H1 (cell line): ENCODE measurements at regions of chr11 and their contacts with region 1.

Region 1: DNA sequence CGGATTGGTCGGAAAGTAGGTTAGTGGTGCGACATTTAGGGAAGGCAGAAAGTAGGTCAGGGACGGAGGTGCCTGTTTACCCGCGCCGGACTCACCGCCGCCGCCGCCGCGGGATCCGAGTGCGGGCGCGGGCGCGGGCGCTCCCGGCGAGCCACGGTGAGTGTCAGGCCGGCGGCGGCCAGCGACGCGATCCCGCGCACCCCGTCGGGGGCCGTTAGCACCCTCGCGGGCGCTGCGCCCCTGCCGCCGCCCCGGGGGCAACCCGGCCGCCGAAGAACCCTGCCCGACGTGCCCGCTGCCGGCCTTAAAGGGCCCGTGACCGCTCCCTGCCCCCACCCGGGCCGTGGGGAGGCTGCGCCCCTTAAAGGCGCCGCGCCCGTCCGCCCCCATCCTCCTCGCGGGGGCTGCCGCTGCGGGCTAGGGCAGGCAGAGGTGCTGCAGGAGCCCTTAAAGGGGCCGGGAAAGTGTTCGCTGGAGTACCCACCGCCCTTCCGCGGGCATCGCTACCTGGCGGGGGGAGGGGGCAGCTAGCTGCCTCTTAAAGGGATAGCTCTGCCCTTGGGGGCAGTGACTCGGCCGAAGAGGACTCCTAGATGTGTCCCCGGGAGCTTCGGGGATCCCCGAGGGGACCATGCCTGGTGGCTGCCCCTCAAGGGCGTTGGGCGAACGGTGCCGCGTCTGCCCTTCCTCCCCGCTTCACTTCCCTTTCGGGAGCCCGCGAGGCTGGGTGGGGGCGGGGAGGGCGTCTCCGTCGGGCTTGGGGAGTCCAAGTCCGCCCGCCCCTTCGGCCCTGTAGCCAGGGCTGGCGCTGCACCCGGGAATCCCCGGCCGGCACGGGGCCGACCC is at the start of gene BMAL1:
- DNase-seq: peak in 1 of 2 experiments; percentile 75
- H3K4me3 ChIP-seq: peak within 1 kb of the TSS; percentile 66 to 89 (median 80)
- H3K27ac ChIP-seq: no peak within 1 kb of the TSS
- H3K4me1 ChIP-seq: no peaks in the 10 kb centered on the region; a peak in 2 of 7 replicates
- H3K27me3 ChIP-seq: peaks cover 6 to 57% (median 42%) of the 10 kb centered on the region in 4 experiments
- CTCF ChIP-seq: no peak
- EP300 ChIP-seq: no peak
- POLR2A ChIP-seq: no peak
- RAD21 ChIP-seq: no peak
- total RNA-seq, gene BMAL1: 6.8 and 9.9 TPM in 2 replicates

Region 2: GRCh38 chr11:13289081-13289480 is 11.1 kb after region 1 on chr11:
- CTCF ChIA-PET with region 1: interaction called, 16 read pairs
- POLR2A ChIA-PET with region 1: no interaction called
- DNase-seq: no peak
- H3K4me3 ChIP-seq: no peak overlapping the region
- H3K27ac ChIP-seq: no peak overlapping the region
- H3K4me1 ChIP-seq: no peaks in the 10 kb centered on the region
- H3K27me3 ChIP-seq: no peaks in the 10 kb centered on the region
- CTCF ChIP-seq: peak in 1 of 3 experiments; percentile 2; a peak in 1 of 4 replicates
- EP300 ChIP-seq: no peak
- POLR2A ChIP-seq: no peak
- RAD21 ChIP-seq: peak; percentile 38 to 44

Region 3: DNA sequence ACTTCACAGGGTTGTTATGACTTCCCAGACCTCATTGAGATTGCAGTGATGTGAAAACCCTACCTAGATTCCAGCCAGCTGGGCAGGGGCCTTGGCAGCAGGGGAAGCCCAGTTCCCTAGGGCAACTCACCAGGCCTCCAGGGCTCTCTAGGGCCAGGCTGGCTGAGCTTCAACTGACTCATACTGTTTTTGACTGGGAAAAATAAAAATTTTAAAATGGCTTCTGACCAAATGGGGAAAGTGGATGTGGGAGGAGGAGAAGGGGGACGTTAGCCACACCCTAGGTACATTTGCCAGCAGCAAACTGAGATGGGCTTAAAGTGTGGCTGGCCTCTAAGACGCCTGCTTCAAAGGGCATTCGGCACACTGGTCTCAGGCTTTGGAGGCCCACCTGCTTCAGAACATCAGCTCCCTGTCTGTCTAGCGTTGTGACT is 38.6 kb after region 1 on chr11:
- CTCF ChIA-PET with region 1: no interaction called
- POLR2A ChIA-PET with region 1: no interaction called
- DNase-seq: no peak
- H3K4me3 ChIP-seq: no peak overlapping the region
- H3K27ac ChIP-seq: no peak overlapping the region
- H3K4me1 ChIP-seq: peaks cover 0 to 11% (median 4%) of the 10 kb centered on the region in 4 experiments; a peak in 5 of 7 replicates
- H3K27me3 ChIP-seq: no peaks in the 10 kb centered on the region
- CTCF ChIP-seq: no peak
- EP300 ChIP-seq: no peak
- POLR2A ChIP-seq: no peak
- RAD21 ChIP-seq: no peak

Region 4: GRCh38 chr11:13354335-13354734 is 76.3 kb after region 1 on chr11:
- CTCF ChIA-PET with region 1: no interaction called
- POLR2A ChIA-PET with region 1: no interaction called
- DNase-seq: no peak
- H3K4me3 ChIP-seq: no peak overlapping the region
- H3K27ac ChIP-seq: no peak overlapping the region
- H3K4me1 ChIP-seq: peaks cover 0 to 4% (median 0%) of the 10 kb centered on the region in 4 experiments; a peak in 2 of 7 replicates
- H3K27me3 ChIP-seq: no peaks in the 10 kb centered on the region
- CTCF ChIP-seq: peak in 2 of 3 experiments; percentile 64; a peak in 3 of 4 replicates
- EP300 ChIP-seq: no peak
- POLR2A ChIP-seq: no peak
- RAD21 ChIP-seq: peak; percentile 52 to 62